Pancreas (tissue), 10 donors: ENCODE measurements at regions of chr17 and their contacts with region 1.

Region 1: DNA sequence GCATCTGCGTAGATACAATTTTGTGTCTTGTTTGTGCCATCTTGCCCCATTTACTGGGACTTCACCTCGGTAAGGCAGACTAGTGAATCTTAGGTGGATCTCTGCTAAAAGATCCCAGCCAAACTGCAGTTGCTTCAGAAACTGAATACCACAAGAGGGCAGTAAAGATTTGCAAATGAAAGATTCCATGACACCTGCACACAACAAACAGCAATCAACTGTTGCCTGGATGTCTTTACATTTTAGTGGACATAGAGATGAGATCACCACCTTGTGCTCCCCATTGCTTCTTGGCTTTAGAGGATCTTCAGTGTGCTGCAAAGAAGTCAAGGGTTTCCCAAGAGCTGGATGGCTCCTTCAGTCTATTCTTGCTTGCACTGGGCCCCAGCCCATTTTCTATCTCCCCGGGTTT is 119.2 kb upstream of the CACNG5 start:
- DNase-seq: peak in 1 of 6 donors; percentile 28
- ATAC-seq: peak; percentile 35 to 58 (median 54)
- H3K4me3 ChIP-seq: no peak overlapping the region
- H3K27ac ChIP-seq: no peak overlapping the region
- H3K4me1 ChIP-seq: peaks cover 6 to 11% (median 10%) of the 10 kb centered on the region in 3 donors
- H3K27me3 ChIP-seq: no peaks in the 10 kb centered on the region
- CTCF ChIP-seq: peak; percentile 34 to 70 (median 56)

Region 2: GRCh38 chr17:66906321-66907278 is 190.8 kb after region 1 on chr17:
- intact Hi-C with region 1: loop called in 2 of 3 experiments (anchors 5 kb)
- DNase-seq: peak; percentile 80 to 93 (median 88)
- ATAC-seq: peak; percentile 45 to 77 (median 71)
- H3K4me3 ChIP-seq: no peak overlapping the region
- H3K27ac ChIP-seq: no peak overlapping the region
- H3K4me1 ChIP-seq: peaks cover 13 to 18% (median 15%) of the 10 kb centered on the region in 3 donors
- H3K27me3 ChIP-seq: no peaks in the 10 kb centered on the region
- CTCF ChIP-seq: peak; percentile 79 to 83 (median 80)